Naive thymus-derived CD4-positive, alpha-beta T cell (primary cell): ENCODE measurements at regions of chr6 and their contacts with region 1.

Region 1: DNA sequence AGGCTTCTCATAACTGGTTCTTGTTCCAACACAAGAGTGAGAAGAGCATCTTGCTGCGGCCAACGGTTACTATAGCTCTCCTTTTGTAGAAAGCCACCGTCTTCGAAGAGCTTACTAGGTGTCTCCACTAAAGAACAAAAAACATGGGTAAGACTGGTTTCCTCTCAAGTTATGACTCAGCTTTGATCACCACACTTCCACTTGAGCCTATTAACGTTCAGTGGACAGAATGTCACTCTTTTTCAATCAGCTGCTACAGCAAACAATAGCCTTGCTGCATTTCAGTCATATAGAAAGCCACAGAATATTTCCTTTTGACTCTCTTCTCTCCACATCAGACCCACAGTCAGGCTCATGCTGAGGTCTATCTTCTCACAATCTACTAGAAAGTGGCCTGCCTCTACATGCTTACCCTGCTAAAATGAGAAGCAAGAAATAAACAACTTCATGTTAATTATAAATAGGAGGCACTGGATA is 243.5 kb upstream of the PREP start:
- DNase-seq: peak in 1 of 9 donors; percentile 36
- ATAC-seq: peak; percentile 81
- H3K4me3 ChIP-seq: no peak overlapping the region
- H3K4me3 Mint-ChIP-seq: peak overlapping the region in 1 of 10 donors; percentile 41
- H3K27ac ChIP-seq: no peak overlapping the region
- H3K27ac Mint-ChIP-seq: peak overlapping the region in 2 of 9 donors; percentile 12 to 83
- H3K4me1 ChIP-seq: peaks cover 0 to 79% of the 10 kb centered on the region in 2 donors
- H3K4me1 Mint-ChIP-seq: peaks cover 30 to 80% (median 44%) of the 10 kb centered on the region in 7 donors
- H3K27me3 ChIP-seq: no peaks in the 10 kb centered on the region
- H3K27me3 Mint-ChIP-seq: peaks cover 0 to 5% (median 0%) of the 10 kb centered on the region in 5 donors

Region 2: DNA sequence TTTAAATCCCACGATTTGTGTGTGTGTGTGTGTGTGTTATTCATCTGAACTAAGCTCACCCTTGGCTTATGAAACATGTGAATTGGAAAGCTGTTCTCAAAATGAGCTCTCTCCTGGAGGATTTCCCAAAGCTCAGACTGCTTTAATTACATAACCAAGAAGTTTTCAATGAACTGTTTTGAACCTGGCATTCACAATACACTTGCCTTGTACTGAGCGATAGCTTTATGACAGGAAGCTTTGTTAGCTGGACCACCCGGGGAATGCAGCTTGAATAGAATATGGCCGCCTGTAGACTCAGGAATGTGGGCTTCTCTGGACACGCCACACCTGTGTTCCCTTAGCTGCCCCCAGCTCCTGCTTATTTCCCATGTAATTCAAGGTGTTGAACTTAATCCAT is 172.2 kb before region 1 on chr6:
- CTCF ChIA-PET with region 1: no interaction called
- POLR2A ChIA-PET with region 1: no interaction called
- intact Hi-C with region 1: no loop called
- DNase-seq: no peak
- ATAC-seq: no peak
- H3K4me3 ChIP-seq: no peak overlapping the region
- H3K4me3 Mint-ChIP-seq: no peak overlapping the region
- H3K27ac ChIP-seq: no peak overlapping the region
- H3K27ac Mint-ChIP-seq: no peak overlapping the region
- H3K4me1 ChIP-seq: no peaks in the 10 kb centered on the region
- H3K4me1 Mint-ChIP-seq: no peaks in the 10 kb centered on the region
- H3K27me3 ChIP-seq: no peaks in the 10 kb centered on the region
- H3K27me3 Mint-ChIP-seq: peaks cover 22 to 81% (median 36%) of the 10 kb centered on the region in 5 donors

Region 3: DNA sequence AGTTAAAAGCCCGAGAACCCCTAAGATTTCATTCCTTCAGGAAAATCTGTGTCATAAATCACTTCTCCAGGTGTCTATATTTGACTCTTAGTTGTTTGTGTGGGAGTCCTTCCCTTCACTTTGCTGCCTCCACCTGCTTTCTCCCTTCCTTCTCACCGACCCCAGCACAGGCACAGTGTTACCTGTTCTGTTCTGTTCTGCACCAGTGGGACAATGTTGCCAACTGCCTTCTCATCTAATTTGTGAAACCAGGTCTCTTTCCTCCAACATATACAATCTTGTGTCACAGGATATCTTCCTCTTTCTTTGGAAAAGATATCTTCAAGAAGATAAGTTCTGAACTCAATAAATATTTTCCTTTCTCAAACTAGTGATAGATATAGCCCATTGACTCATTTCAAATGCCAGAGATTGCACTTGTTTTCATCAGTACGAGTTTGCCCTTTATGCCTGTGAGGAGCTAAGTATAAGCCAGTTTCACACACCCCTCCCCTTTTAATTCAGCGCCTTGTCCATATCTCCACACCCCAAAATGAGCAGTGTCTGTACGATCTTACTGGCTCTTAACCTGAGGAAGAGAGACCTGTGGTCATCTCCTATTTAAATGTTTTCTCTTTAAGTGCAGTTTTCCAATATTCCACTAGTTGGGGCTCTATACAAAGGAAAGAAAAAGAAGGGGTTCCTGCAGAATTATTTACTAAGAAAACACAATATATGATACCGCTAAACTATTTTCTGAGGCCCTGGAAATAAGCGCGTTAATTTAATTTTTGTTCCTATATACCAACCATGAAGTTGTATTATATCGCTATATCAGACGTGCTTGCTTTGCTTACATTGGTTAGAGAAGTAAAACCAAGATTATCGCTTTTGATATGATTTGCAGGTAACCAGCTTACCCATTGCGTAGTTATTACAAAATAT is 161.9 kb before region 1 on chr6:
- CTCF ChIA-PET with region 1: no interaction called
- POLR2A ChIA-PET with region 1: no interaction called
- intact Hi-C with region 1: loop called in 1 of 2 experiments (anchors 2 kb)
- DNase-seq: peak in 5 of 9 donors; percentile 7 to 36 (median 20)
- ATAC-seq: peak; percentile 59
- H3K4me3 ChIP-seq: no peak overlapping the region
- H3K4me3 Mint-ChIP-seq: no peak overlapping the region
- H3K27ac ChIP-seq: no peak overlapping the region
- H3K27ac Mint-ChIP-seq: peak overlapping the region in 2 of 9 donors; percentile 20 to 52
- H3K4me1 ChIP-seq: peaks cover 0 to 35% of the 10 kb centered on the region in 2 donors
- H3K4me1 Mint-ChIP-seq: peaks cover 0 to 63% (median 0%) of the 10 kb centered on the region in 7 donors
- H3K27me3 ChIP-seq: no peaks in the 10 kb centered on the region
- H3K27me3 Mint-ChIP-seq: peaks cover 11 to 16% (median 13%) of the 10 kb centered on the region in 5 donors

Region 4: DNA sequence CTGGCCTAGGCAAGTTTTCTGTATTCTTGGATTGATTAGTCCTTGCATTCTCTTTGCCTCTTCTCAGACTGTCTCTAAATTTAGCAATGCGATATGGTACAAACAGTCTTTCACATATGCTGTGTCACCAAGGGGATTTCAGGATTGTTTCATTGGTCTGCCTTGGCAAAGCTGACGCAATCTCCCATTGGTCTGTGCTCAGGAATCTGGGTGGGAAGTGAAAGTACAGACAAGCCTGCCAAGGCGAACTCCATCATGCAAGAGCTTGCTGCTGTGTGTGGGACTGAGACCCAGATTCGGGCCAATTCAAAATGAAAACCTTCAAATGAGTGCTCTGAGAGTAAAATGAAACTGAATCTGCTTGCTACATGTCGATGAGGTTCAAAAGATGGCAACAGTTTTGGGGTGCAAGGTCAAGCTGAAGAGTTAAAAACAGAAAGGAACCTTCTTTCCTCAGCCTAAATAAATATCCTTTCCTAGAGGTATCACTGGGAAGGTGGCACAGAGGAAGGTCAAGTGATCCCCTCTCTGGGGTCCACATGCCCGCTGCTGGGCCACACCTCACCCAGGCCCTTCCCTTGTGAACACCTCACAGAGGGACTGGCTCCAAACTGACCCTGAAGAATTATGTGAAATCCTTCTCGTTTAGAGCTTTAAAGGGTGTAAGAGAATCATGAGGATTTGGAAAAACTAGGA is 44.7 kb before region 1 on chr6:
- CTCF ChIA-PET with region 1: no interaction called
- POLR2A ChIA-PET with region 1: no interaction called
- intact Hi-C with region 1: loop called in 1 of 2 experiments (anchors 2 kb)
- DNase-seq: peak in 1 of 9 donors; percentile 40
- ATAC-seq: peak; percentile 75
- H3K4me3 ChIP-seq: no peak overlapping the region
- H3K4me3 Mint-ChIP-seq: peak overlapping the region in 1 of 10 donors; percentile 67
- H3K27ac ChIP-seq: no peak overlapping the region
- H3K27ac Mint-ChIP-seq: peak overlapping the region in 1 of 9 donors; percentile 86
- H3K4me1 ChIP-seq: peaks cover 0 to 3% of the 10 kb centered on the region in 2 donors
- H3K4me1 Mint-ChIP-seq: peaks cover 0 to 18% (median 0%) of the 10 kb centered on the region in 7 donors
- H3K27me3 ChIP-seq: no peaks in the 10 kb centered on the region
- H3K27me3 Mint-ChIP-seq: peaks cover 2 to 11% (median 5%) of the 10 kb centered on the region in 5 donors

Region 5: GRCh38 chr6:105675715-105676397 is 29.4 kb after region 1 on chr6:
- CTCF ChIA-PET with region 1: no interaction called
- POLR2A ChIA-PET with region 1: no interaction called
- intact Hi-C with region 1: no loop called
- DNase-seq: no peak
- ATAC-seq: no peak
- H3K4me3 ChIP-seq: no peak overlapping the region
- H3K4me3 Mint-ChIP-seq: no peak overlapping the region
- H3K27ac ChIP-seq: no peak overlapping the region
- H3K27ac Mint-ChIP-seq: no peak overlapping the region
- H3K4me1 ChIP-seq: no peaks in the 10 kb centered on the region
- H3K4me1 Mint-ChIP-seq: peaks cover 0 to 3% (median 0%) of the 10 kb centered on the region in 7 donors
- H3K27me3 ChIP-seq: no peaks in the 10 kb centered on the region
- H3K27me3 Mint-ChIP-seq: peaks cover 0 to 27% (median 11%) of the 10 kb centered on the region in 5 donors

Region 6: DNA sequence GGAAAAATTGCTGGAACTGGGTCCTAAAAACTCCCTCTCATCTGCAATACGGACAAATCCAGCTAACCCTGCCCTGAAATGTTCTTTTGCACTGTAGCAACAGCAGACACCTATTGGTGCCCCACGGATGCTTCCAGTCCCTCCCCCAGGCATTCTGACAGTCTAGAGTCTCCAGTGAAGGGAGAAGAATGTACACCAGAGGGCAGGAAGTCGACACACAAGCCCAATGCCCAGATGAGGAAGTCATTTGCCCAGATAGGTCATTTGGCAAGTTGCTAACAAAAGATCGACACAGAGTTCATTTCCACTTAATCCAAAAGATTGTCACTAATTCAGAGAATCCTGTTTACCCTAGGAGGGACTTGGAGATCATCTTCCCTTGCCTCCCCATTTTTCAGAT is 146.7 kb after region 1 on chr6:
- CTCF ChIA-PET with region 1: no interaction called
- POLR2A ChIA-PET with region 1: no interaction called
- intact Hi-C with region 1: loop called in 1 of 2 experiments (anchors 5 kb)
- DNase-seq: peak in 3 of 9 donors; percentile 9 to 23 (median 15)
- ATAC-seq: peak; percentile 76
- H3K4me3 ChIP-seq: no peak overlapping the region
- H3K4me3 Mint-ChIP-seq: peak overlapping the region in 1 of 10 donors; percentile 28
- H3K27ac ChIP-seq: no peak overlapping the region
- H3K27ac Mint-ChIP-seq: peak overlapping the region in 1 of 9 donors; percentile 68
- H3K4me1 ChIP-seq: peaks cover 0 to 3% of the 10 kb centered on the region in 2 donors
- H3K4me1 Mint-ChIP-seq: peaks cover 6 to 79% (median 12%) of the 10 kb centered on the region in 7 donors
- H3K27me3 ChIP-seq: no peaks in the 10 kb centered on the region
- H3K27me3 Mint-ChIP-seq: peaks cover 0 to under 1% (median 0%) of the 10 kb centered on the region in 5 donors

Region 7: GRCh38 chr6:105900125-105900937 is 253.9 kb after region 1 on chr6:
- CTCF ChIA-PET with region 1: no interaction called
- POLR2A ChIA-PET with region 1: no interaction called
- intact Hi-C with region 1: loop called in 1 of 2 experiments (anchors 1 kb)
- DNase-seq: peak in 2 of 9 donors; percentile 11 to 33
- ATAC-seq: peak; percentile 52
- H3K4me3 ChIP-seq: no peak overlapping the region
- H3K4me3 Mint-ChIP-seq: peak overlapping the region in 9 of 10 donors; percentile 23 to 84 (median 70)
- H3K27ac ChIP-seq: no peak overlapping the region
- H3K27ac Mint-ChIP-seq: peak overlapping the region in 2 of 9 donors; percentile 53 to 95
- H3K4me1 ChIP-seq: peaks cover 4 to 8% of the 10 kb centered on the region in 2 donors
- H3K4me1 Mint-ChIP-seq: peaks cover 9 to 26% (median 12%) of the 10 kb centered on the region in 7 donors
- H3K27me3 ChIP-seq: no peaks in the 10 kb centered on the region
- H3K27me3 Mint-ChIP-seq: peaks cover 0 to 4% (median 0%) of the 10 kb centered on the region in 5 donors

Region 8: GRCh38 chr6:106163446-106163965 is 517.1 kb after region 1 on chr6:
- CTCF ChIA-PET with region 1: no interaction called
- POLR2A ChIA-PET with region 1: no interaction called
- intact Hi-C with region 1: loop called in 1 of 2 experiments (anchors 1 kb)
- DNase-seq: peak in 1 of 9 donors; percentile 51
- ATAC-seq: peak; percentile 60
- H3K4me3 ChIP-seq: no peak overlapping the region
- H3K4me3 Mint-ChIP-seq: peak overlapping the region in 7 of 10 donors; percentile 14 to 77 (median 31)
- H3K27ac ChIP-seq: no peak overlapping the region
- H3K27ac Mint-ChIP-seq: peak overlapping the region in 6 of 9 donors; percentile 14 to 98 (median 34)
- H3K4me1 ChIP-seq: peaks cover 6 to 26% of the 10 kb centered on the region in 2 donors
- H3K4me1 Mint-ChIP-seq: peaks cover 13 to 56% (median 22%) of the 10 kb centered on the region in 7 donors
- H3K27me3 ChIP-seq: no peaks in the 10 kb centered on the region
- H3K27me3 Mint-ChIP-seq: peaks cover 0 to 3% (median 0%) of the 10 kb centered on the region in 5 donors

Region 9: DNA sequence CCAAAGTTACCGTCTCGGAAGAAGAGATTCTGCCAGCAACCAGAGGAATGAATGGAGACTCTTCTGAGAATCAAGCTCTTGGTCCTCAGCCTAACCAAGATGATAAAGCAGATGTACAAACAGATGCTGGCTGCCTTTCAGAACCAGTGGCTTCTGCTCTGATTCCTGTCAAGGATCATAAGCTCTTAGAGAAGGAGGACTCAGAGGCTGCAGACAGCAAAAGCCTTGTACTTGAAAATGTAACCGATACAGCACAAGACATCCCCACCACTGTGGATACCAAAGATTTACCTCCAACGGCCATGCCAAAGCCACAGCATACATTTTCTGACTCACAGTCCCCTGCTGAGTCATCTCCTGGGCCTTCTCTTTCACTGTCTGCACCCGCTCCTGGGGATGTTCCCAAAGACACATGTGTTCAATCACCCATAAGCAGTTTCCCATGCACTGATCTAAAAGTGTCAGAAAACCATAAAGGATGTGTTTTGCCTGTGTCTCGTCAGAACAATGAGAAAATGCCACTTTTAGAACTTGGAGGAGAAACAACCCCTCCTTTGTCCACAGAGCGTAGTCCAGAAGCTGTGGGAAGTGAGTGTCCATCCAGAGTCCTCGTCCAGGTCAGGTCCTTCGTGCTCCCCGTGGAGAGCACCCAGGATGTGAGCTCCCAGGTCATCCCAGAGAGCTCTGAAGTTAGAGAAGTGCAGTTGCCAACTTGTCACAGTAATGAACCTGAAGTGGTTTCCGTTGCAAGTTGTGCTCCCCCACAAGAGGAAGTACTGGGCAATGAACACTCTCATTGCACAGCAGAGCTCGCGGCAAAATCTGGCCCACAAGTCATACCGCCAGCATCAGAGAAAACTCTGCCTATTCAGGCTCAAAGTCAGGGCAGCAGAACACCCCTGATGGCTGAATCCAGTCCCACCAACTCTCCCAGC is 873.3 kb after region 1 on chr6:
- CTCF ChIA-PET with region 1: no interaction called
- POLR2A ChIA-PET with region 1: no interaction called
- intact Hi-C with region 1: loop called in 1 of 2 experiments (anchors 2 kb)
- DNase-seq: peak; percentile 38 to 80 (median 72)
- ATAC-seq: peak; percentile 68
- H3K4me3 ChIP-seq: peak overlapping the region; percentile 69
- H3K4me3 Mint-ChIP-seq: peak overlapping the region; percentile 82 to 96 (median 93)
- H3K27ac ChIP-seq: peak overlapping the region; percentile 86
- H3K27ac Mint-ChIP-seq: peak overlapping the region; percentile 92 to 99 (median 95)
- H3K4me1 ChIP-seq: peaks cover 42 to 47% of the 10 kb centered on the region in 2 donors
- H3K4me1 Mint-ChIP-seq: peaks cover 36 to 87% (median 71%) of the 10 kb centered on the region in 7 donors
- H3K27me3 ChIP-seq: no peaks in the 10 kb centered on the region
- H3K27me3 Mint-ChIP-seq: no peaks in the 10 kb centered on the region